A673 (cell line): ENCODE measurements at regions of chr2 and their contacts with region 1.

Region 1: GRCh38 chr2:159366538-159366937 is 80.0 kb upstream of the WDSUB1 start:
- DNase-seq: no peak
- H3K4me3 ChIP-seq: no peak overlapping the region
- H3K27ac ChIP-seq: no peak overlapping the region
- H3K4me1 ChIP-seq: no peaks in the 10 kb centered on the region
- H3K27me3 ChIP-seq: no peaks in the 10 kb centered on the region
- CTCF ChIP-seq: no peak

Region 2: GRCh38 chr2:159206736-159207380 is 159.7 kb before region 1 on chr2:
- CTCF ChIA-PET with region 1: no interaction called
- POLR2A ChIA-PET with region 1: interaction called, 17 read pairs
- intact Hi-C with region 1: no loop called
- DNase-seq: no peak
- H3K4me3 ChIP-seq: no peak overlapping the region
- H3K27ac ChIP-seq: no peak overlapping the region
- H3K4me1 ChIP-seq: no peaks in the 10 kb centered on the region
- H3K27me3 ChIP-seq: no peaks in the 10 kb centered on the region
- CTCF ChIP-seq: no peak

Region 3: DNA sequence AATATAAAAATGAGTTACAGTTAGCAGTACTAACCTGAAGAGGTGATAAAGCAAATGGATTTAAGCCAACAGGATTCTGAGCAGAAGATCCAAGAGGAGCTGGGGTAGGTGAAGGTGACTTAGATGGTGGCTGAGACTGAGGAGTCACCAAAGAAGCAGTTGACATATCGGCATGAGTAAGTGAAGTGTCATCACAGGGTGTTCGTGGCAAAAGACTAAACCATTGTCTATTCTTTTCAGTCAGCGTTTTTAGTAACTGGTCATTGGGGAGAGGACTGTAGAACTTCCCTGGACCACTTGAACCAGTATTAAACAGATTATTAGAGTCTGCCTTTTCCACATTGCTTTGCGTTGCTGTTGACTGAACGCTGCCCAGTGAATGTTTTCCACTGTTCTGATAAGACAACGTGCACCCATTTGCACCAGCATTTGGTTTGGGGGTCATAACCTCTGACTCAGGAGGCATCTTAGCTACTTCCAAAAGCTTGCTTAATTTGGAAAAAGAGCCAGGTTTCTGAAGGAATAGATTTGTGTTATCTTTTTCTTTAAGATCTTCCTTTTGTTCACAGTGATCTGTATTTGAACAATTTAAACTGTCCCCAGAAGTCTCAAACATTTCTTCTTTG is 16.8 kb before region 1 on chr2:
- CTCF ChIA-PET with region 1: no interaction called
- POLR2A ChIA-PET with region 1: no interaction called
- intact Hi-C with region 1: no loop called
- DNase-seq: no peak
- H3K4me3 ChIP-seq: no peak overlapping the region
- H3K27ac ChIP-seq: no peak overlapping the region
- H3K4me1 ChIP-seq: no peaks in the 10 kb centered on the region
- H3K27me3 ChIP-seq: no peaks in the 10 kb centered on the region
- CTCF ChIP-seq: no peak